MCF 10A (cell line): ENCODE measurements at regions of chr2 and their contacts with region 1.

Region 1: DNA sequence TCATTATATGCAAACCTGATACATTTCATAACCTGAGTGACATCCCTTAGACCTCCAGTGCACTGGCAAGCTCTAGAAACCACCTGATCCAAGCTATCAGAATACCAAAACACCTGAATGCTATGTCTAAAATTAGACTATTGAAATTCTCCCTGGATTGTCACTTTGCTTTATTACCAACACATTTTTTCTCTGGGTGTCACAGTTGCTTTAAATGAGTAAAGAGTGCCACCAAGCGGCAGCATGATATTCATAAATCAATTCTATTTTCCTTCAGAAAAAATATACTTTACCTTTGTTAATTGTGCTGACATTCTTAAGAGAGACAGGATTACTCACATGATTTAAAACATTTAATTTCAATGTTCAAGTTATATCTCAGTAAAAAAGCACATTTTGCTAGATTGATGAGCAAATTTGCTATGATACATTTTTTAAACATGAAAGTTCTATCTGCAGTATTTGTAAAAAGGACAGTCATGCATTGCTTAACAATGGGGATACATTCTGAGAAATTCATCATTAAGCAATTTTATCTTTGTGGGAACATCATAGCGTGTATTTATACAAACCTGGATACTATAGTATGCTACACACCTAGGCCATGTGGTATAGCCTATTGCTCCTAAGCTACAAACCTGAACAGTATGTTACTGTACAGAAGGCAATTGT is 338.4 kb upstream of the SLC39A10 start:
- DNase-seq: peak; percentile 70
- H3K4me3 Mint-ChIP-seq: peak overlapping the region; percentile 28
- H3K27ac Mint-ChIP-seq: peak overlapping the region; percentile 82
- H3K4me1 Mint-ChIP-seq: peaks cover 31% of the 10 kb centered on the region
- H3K27me3 Mint-ChIP-seq: no peaks in the 10 kb centered on the region
- CTCF ChIP-seq: peak; percentile 67

Region 2: DNA sequence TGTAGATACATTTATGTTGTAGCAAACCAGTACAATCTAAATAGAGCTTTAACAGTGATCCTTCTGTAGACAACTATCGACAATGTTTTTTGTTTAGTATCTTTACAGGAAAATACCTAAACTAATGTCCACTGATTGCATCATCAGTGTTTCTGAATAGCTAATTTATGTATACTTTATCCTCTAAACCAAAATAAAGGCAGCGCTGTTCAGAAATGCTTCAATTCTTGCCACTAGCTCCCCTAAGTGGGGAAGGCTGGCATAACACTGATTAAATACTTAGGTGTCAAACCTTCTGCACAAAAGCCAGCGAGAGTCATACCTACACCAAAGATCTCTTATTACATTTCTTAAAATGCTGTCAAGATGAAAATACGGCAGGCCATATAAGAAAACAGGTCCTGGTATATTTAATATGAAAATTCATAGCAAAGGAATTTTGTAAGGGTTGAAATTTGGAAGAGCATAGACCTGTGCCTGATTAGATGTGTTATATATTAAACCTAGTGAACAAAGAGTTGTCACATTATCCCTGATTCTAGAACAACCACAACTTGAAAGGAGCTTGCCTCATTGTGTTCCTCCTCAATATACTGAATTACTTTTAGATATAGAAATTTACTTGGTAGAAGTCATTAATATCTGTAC is 1355.0 kb before region 1 on chr2:
- CTCF ChIA-PET with region 1: no interaction called
- POLR2A ChIA-PET with region 1: no interaction called
- intact Hi-C with region 1: loop called (anchors 5 kb)
- DNase-seq: peak; percentile 71
- H3K4me3 Mint-ChIP-seq: no peak overlapping the region
- H3K27ac Mint-ChIP-seq: peak overlapping the region; percentile 69
- H3K4me1 Mint-ChIP-seq: no peaks in the 10 kb centered on the region
- H3K27me3 Mint-ChIP-seq: no peaks in the 10 kb centered on the region
- CTCF ChIP-seq: peak; percentile 61

Region 3: DNA sequence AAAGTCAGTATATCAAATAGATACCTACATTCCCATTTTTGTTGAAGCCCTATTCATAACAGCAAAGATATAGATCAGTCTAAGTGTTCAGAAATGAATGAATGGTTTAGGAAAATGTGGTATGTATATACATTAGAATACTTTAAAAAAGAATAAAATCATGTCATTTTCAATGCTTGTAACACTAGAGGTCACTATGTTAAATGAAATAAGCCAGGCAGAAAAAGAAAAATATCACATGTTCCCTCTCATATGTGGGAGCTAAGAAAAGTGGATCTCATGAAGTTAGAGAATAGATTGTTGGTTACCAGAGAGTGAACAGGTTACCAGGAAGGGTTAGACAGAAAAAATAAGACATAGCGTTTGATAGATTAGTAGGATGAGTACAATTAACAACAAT is 772.6 kb before region 1 on chr2:
- CTCF ChIA-PET with region 1: interaction called, 5 read pairs
- POLR2A ChIA-PET with region 1: no interaction called
- intact Hi-C with region 1: loop called (anchors 1 kb)
- DNase-seq: peak; percentile 16
- H3K4me3 Mint-ChIP-seq: no peak overlapping the region
- H3K27ac Mint-ChIP-seq: peak overlapping the region; percentile 16
- H3K4me1 Mint-ChIP-seq: peaks cover 9% of the 10 kb centered on the region
- H3K27me3 Mint-ChIP-seq: no peaks in the 10 kb centered on the region
- CTCF ChIP-seq: peak; percentile 35

Region 4: GRCh38 chr2:195304310-195304709 is 14.3 kb before region 1 on chr2:
- CTCF ChIA-PET with region 1: no interaction called
- POLR2A ChIA-PET with region 1: no interaction called
- intact Hi-C with region 1: no loop called
- DNase-seq: peak; percentile 20
- H3K4me3 Mint-ChIP-seq: no peak overlapping the region
- H3K27ac Mint-ChIP-seq: no peak overlapping the region
- H3K4me1 Mint-ChIP-seq: no peaks in the 10 kb centered on the region
- H3K27me3 Mint-ChIP-seq: no peaks in the 10 kb centered on the region
- CTCF ChIP-seq: peak; percentile 23

Region 5: GRCh38 chr2:195364015-195364965 is 45.7 kb after region 1 on chr2:
- CTCF ChIA-PET with region 1: interaction called, 3 read pairs
- POLR2A ChIA-PET with region 1: interaction called, 12 read pairs
- intact Hi-C with region 1: no loop called
- DNase-seq: peak; percentile 42
- H3K4me3 Mint-ChIP-seq: no peak overlapping the region
- H3K27ac Mint-ChIP-seq: peak overlapping the region; percentile 74
- H3K4me1 Mint-ChIP-seq: peaks cover 13% of the 10 kb centered on the region
- H3K27me3 Mint-ChIP-seq: no peaks in the 10 kb centered on the region
- CTCF ChIP-seq: no peak

Region 6: GRCh38 chr2:195533771-195534642 is 215.4 kb after region 1 on chr2:
- CTCF ChIA-PET with region 1: interaction called, 4 read pairs
- POLR2A ChIA-PET with region 1: interaction called, 3 read pairs
- intact Hi-C with region 1: loop called (anchors 5 kb)
- DNase-seq: peak; percentile 91
- H3K4me3 Mint-ChIP-seq: no peak overlapping the region
- H3K27ac Mint-ChIP-seq: peak overlapping the region; percentile 91
- H3K4me1 Mint-ChIP-seq: peaks cover 24% of the 10 kb centered on the region
- H3K27me3 Mint-ChIP-seq: no peaks in the 10 kb centered on the region
- CTCF ChIP-seq: no peak

Region 7: GRCh38 chr2:195937176-195937575 is 618.6 kb after region 1 on chr2:
- CTCF ChIA-PET with region 1: interaction called, 9 read pairs
- POLR2A ChIA-PET with region 1: no interaction called
- intact Hi-C with region 1: loop called (anchors 2 kb)
- DNase-seq: no peak
- H3K4me3 Mint-ChIP-seq: no peak overlapping the region
- H3K27ac Mint-ChIP-seq: no peak overlapping the region
- H3K4me1 Mint-ChIP-seq: no peaks in the 10 kb centered on the region
- H3K27me3 Mint-ChIP-seq: no peaks in the 10 kb centered on the region
- CTCF ChIP-seq: no peak